Gastrocnemius medialis (tissue), 4 donors: ENCODE measurements at regions of chr2 and their contacts with region 1.

Region 1: GRCh38 chr2:61764035-61764800 is 89.6 kb downstream of the FAM161A start:
- DNase-seq: peak; percentile 96 to 99
- ATAC-seq: peak; percentile 91 to 94
- H3K4me3 ChIP-seq: peak overlapping the region; percentile 61 to 81 (median 74)
- H3K27ac ChIP-seq: peak overlapping the region; percentile 90 to 99 (median 98)
- H3K4me1 ChIP-seq: peaks cover 7 to 16% of the 10 kb centered on the region in 2 donors
- H3K27me3 ChIP-seq: no peaks in the 10 kb centered on the region
- CTCF ChIP-seq: peak in 2 of 5 experiments; percentile 3 to 5
- POLR2A ChIP-seq: peak; percentile 88 to 97

Region 2: GRCh38 chr2:61434314-61434713 is 329.9 kb before region 1 on chr2:
- in situ Hi-C with region 1: no loop called
- intact Hi-C with region 1: loop called (anchors 10 kb)
- DNase-seq: peak; percentile 79 to 97
- ATAC-seq: peak; percentile 72 to 88
- H3K4me3 ChIP-seq: no peak overlapping the region
- H3K27ac ChIP-seq: peak overlapping the region; percentile 83 to 86 (median 85)
- H3K4me1 ChIP-seq: peaks cover 53 to 59% of the 10 kb centered on the region in 2 donors
- H3K27me3 ChIP-seq: no peaks in the 10 kb centered on the region
- CTCF ChIP-seq: no peak
- POLR2A ChIP-seq: no peak

Region 3: GRCh38 chr2:61658841-61659780 is 105.1 kb before region 1 on chr2:
- in situ Hi-C with region 1: loop called in 1 of 4 experiments (anchors 25 kb)
- intact Hi-C with region 1: loop called (anchors 2 kb)
- DNase-seq: peak; percentile 69 to 74
- ATAC-seq: peak; percentile 94 to 97
- H3K4me3 ChIP-seq: no peak overlapping the region
- H3K27ac ChIP-seq: peak overlapping the region; percentile 80 to 92 (median 88)
- H3K4me1 ChIP-seq: peaks cover 22 to 24% of the 10 kb centered on the region in 2 donors
- H3K27me3 ChIP-seq: no peaks in the 10 kb centered on the region
- CTCF ChIP-seq: peak in 4 of 5 experiments; percentile 21 to 51 (median 38)
- POLR2A ChIP-seq: no peak

Region 4: DNA sequence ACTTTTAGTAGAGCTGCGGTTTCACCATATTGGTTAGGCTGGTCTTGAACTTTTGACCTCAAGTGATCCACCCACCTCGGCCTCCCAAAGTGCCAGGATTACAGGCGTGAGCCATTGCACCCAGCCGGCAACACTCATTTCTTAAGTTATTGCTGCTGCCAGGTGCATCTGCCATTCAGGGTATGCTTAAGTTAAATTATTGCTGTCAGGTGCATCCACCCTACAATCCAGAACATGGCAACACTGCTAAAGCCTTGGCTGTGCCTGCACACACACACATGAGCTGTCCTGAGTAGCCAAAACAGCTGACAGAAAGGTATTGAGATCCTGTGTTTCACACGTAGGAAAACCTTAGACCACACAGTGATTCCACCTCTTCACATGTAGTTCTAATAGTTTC is 58.6 kb before region 1 on chr2:
- in situ Hi-C with region 1: no loop called
- intact Hi-C with region 1: loop called (anchors 2 kb)
- DNase-seq: peak; percentile 85 to 93
- ATAC-seq: peak; percentile 82 to 84
- H3K4me3 ChIP-seq: no peak overlapping the region
- H3K27ac ChIP-seq: peak overlapping the region; percentile 86 to 98 (median 92)
- H3K4me1 ChIP-seq: peaks cover 28 to 51% of the 10 kb centered on the region in 2 donors
- H3K27me3 ChIP-seq: no peaks in the 10 kb centered on the region
- CTCF ChIP-seq: no peak
- POLR2A ChIP-seq: peak in 1 of 2 donors; percentile 60

Region 5: DNA sequence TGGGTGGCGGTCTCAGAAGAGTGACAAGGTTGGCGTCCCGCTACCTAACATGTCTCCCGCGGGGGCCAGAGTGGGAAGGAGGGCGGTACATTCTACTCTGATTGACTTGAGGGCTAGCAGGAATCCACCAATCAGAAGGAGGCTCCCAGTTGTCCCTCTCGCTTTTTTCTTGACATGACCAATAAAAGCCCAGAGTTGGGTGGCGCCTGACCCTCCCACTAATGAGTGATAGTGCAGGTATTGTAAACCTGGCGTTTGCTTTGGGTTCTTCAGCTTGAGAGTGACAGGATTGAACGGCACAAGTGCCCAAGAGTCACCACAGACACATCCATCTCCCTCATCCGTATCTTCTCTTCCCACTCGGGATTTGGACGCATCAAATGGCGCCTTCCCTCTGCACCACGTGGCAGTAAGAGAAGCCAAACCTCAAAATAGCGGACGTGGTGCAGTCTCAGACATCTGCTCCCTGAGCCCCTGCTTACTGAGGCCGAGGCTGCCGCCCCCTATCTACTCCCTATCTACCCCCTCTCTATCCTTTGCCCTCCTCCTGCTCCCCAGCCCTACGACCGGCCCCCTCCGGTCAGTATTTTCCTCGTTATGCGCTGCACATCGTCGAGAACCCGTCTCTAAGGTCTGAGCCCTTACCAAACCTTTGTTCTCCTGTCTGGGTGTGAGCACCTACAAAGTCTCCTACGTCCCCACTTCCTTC is 90.4 kb after region 1 on chr2:
- in situ Hi-C with region 1: no loop called
- intact Hi-C with region 1: loop called (anchors 2 kb)
- DNase-seq: peak; percentile 90 to 93
- ATAC-seq: peak; percentile 97 to 98
- H3K4me3 ChIP-seq: peak overlapping the region; percentile 80 to 89 (median 82)
- H3K27ac ChIP-seq: peak overlapping the region; percentile 89 to 93 (median 90)
- H3K4me1 ChIP-seq: peaks cover 8 to 13% of the 10 kb centered on the region in 2 donors
- H3K27me3 ChIP-seq: no peaks in the 10 kb centered on the region
- CTCF ChIP-seq: no peak
- POLR2A ChIP-seq: no peak

Region 6: GRCh38 chr2:62705007-62705829 is 941.0 kb after region 1 on chr2 and contains the start of gene EHBP1:
- in situ Hi-C with region 1: no loop called
- intact Hi-C with region 1: loop called (anchors 10 kb)
- DNase-seq: peak; percentile 98 to 99
- ATAC-seq: peak; percentile 96 to 97
- H3K4me3 ChIP-seq: peak within 1 kb of the TSS; percentile 82 to 100 (median 91)
- H3K27ac ChIP-seq: peak within 1 kb of the TSS; percentile 84 to 98 (median 94)
- H3K4me1 ChIP-seq: peaks cover 28 to 31% of the 10 kb centered on the region in 2 donors
- H3K27me3 ChIP-seq: no peaks in the 10 kb centered on the region
- CTCF ChIP-seq: no peak
- POLR2A ChIP-seq: peak; percentile 53 to 77
- total RNA-seq, gene EHBP1: 11.1 to 19.0 (median 15.4) TPM